ENCODE measurements at regions of chr14 and their contacts with region 1.

Region 1: DNA sequence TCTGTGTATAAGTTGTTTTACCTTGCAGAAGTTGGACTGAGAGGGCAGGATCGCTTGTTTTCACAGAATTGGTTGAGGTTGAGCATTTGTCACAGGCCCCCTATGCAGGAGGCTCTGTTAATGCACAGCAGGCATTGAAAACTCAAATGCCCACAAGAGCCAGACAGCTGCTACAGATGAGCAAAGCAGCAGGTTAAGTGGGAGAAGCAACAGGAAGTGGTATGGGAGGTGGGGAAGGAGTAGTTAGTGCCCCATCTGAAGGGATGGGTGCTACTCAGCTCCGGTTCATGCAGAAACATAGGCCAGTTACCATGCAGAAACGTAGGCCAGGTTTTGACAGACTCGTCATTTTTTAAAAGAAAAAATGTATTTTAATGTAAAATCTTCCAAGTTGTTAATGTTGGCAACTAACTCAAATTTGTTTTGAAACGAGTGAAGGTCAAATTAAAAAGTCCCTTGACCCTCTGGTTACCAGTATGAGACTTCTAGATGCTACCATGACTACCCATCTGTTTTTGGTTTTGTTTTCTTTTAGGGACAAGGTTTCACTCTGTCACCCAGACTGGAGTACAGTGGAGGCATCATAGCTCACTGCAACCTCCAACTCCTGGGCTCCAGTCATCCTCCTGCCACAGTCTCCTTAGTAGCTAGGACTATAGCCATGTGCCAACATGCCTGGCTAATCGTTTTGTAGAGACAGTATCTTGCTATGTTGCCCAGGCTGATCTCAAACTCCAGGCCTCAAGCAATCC is 84.7 kb upstream of the FRMD6 start:
- DNase-seq: peak in 1 of 2 donors; percentile 41
- ATAC-seq: peak; percentile 39 to 93 (median 85)
- H3K4me3 ChIP-seq: no peak overlapping the region
- H3K4me3 Mint-ChIP-seq: peak overlapping the region; percentile 18
- H3K27ac ChIP-seq: peak overlapping the region; percentile 11
- H3K27ac Mint-ChIP-seq: peak overlapping the region in 1 of 2 donors; percentile 65
- H3K4me1 ChIP-seq: peaks cover 11% of the 10 kb centered on the region
- H3K4me1 Mint-ChIP-seq: peaks cover 21 to 29% of the 10 kb centered on the region in 2 donors
- H3K27me3 ChIP-seq: no peaks in the 10 kb centered on the region
- H3K27me3 Mint-ChIP-seq: peaks cover 4 to 23% of the 10 kb centered on the region in 2 donors
- CTCF ChIP-seq: no peak

Region 2: GRCh38 chr14:51472881-51473280 is 94.1 kb before region 1 on chr14:
- intact Hi-C with region 1: no loop called
- DNase-seq: no peak
- ATAC-seq: no peak
- H3K4me3 ChIP-seq: no peak overlapping the region
- H3K4me3 Mint-ChIP-seq: no peak overlapping the region
- H3K27ac ChIP-seq: no peak overlapping the region
- H3K27ac Mint-ChIP-seq: no peak overlapping the region
- H3K4me1 ChIP-seq: no peaks in the 10 kb centered on the region
- H3K4me1 Mint-ChIP-seq: no peaks in the 10 kb centered on the region
- H3K27me3 ChIP-seq: peaks cover 2% of the 10 kb centered on the region
- H3K27me3 Mint-ChIP-seq: peaks cover 12 to 43% of the 10 kb centered on the region in 2 donors
- CTCF ChIP-seq: no peak

Region 3: DNA sequence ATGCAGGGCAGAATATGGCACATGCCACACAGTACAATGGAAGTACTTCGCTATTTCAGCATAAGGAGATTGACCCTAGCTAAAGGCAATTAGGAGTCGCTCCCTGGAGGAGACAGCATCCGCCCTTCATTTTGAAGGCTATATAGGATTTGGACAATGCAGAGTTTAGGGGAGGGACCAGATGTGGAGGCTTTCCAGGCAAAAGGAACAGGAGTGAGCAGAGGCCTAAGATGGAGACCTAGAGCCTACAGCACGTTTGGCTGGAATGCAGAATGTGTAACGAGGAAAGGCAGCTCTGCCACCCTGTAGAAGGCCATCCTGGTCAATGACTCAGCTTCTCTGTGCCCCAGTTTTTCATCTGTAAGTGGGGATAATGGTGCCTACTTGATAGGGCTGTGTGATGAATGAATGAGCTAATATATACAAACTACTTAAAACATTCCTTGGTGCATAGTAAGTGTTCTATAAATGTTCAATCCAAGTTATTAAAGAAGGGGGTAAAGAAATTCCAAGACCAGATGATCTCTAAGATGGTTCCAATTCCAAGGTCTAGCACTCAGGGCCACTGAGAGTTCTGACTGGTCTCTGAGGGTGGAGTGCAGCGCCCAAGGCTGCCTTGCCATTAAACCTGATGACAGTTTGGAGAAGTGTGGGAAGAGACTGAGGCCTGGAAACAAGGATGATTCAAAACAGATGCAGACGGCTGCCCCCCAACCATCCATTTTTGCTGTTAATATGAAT is 30.4 kb after region 1 on chr14:
- intact Hi-C with region 1: loop called (anchors 2 kb)
- DNase-seq: no peak
- ATAC-seq: no peak
- H3K4me3 ChIP-seq: no peak overlapping the region
- H3K4me3 Mint-ChIP-seq: no peak overlapping the region
- H3K27ac ChIP-seq: no peak overlapping the region
- H3K27ac Mint-ChIP-seq: peak overlapping the region; percentile 28 to 76
- H3K4me1 ChIP-seq: peaks cover 18% of the 10 kb centered on the region
- H3K4me1 Mint-ChIP-seq: peaks cover 32 to 64% of the 10 kb centered on the region in 2 donors
- H3K27me3 ChIP-seq: peaks cover 6% of the 10 kb centered on the region
- H3K27me3 Mint-ChIP-seq: peaks cover 18 to 41% of the 10 kb centered on the region in 2 donors
- CTCF ChIP-seq: no peak

Measured in natural killer cell (primary cell).